ENCODE measurements at regions of chr1 and their contacts with region 1.

Region 1: GRCh38 chr1:58190267-58190988 is 356.1 kb downstream of the OMA1 start:
- DNase-seq: no peak
- ATAC-seq: no peak
- H3K4me3 ChIP-seq: no peak overlapping the region
- H3K27ac ChIP-seq: no peak overlapping the region
- H3K4me1 ChIP-seq: no peaks in the 10 kb centered on the region
- H3K27me3 ChIP-seq: peaks cover 15% of the 10 kb centered on the region
- CTCF ChIP-seq: no peak
- POLR2A ChIP-seq: no peak
- RAD21 ChIP-seq: no peak

Region 2: DNA sequence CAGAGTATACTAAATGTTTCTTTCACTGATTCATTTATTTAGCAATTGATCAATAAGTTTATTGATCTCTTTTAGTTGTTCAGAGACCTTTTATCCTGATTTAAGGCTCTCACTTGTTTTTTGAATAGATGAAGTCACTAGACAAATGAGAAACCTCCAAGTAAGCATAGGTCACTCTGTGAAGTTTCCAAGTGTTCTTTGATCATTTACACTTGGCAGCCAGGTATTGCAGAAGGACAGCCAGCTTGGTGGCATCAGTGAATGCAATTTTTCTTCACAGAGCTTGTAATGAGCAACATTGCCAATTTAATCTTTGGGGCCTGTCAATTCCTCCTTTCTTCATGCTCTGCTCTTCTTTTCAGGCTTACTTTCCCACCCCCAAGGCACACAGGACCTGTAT is 56.9 kb before region 1 on chr1:
- CTCF ChIA-PET with region 1: no interaction called
- POLR2A ChIA-PET with region 1: no interaction called
- RAD21 ChIA-PET with region 1: no interaction called
- intact Hi-C with region 1: no loop called
- DNase-seq: no peak
- ATAC-seq: no peak
- H3K4me3 ChIP-seq: no peak overlapping the region
- H3K27ac ChIP-seq: no peak overlapping the region
- H3K4me1 ChIP-seq: no peaks in the 10 kb centered on the region
- H3K27me3 ChIP-seq: no peaks in the 10 kb centered on the region
- CTCF ChIP-seq: no peak
- POLR2A ChIP-seq: no peak
- RAD21 ChIP-seq: no peak

Region 3: GRCh38 chr1:58143972-58144697 is 46.3 kb before region 1 on chr1:
- CTCF ChIA-PET with region 1: no interaction called
- POLR2A ChIA-PET with region 1: no interaction called
- RAD21 ChIA-PET with region 1: no interaction called
- intact Hi-C with region 1: loop called (anchors 1 kb)
- DNase-seq: no peak
- ATAC-seq: no peak
- H3K4me3 ChIP-seq: no peak overlapping the region
- H3K27ac ChIP-seq: no peak overlapping the region
- H3K4me1 ChIP-seq: no peaks in the 10 kb centered on the region
- H3K27me3 ChIP-seq: peaks cover 14% of the 10 kb centered on the region; the same call in 1 of the 2 replicates
- CTCF ChIP-seq: no peak
- POLR2A ChIP-seq: no peak
- RAD21 ChIP-seq: no peak

Region 4: DNA sequence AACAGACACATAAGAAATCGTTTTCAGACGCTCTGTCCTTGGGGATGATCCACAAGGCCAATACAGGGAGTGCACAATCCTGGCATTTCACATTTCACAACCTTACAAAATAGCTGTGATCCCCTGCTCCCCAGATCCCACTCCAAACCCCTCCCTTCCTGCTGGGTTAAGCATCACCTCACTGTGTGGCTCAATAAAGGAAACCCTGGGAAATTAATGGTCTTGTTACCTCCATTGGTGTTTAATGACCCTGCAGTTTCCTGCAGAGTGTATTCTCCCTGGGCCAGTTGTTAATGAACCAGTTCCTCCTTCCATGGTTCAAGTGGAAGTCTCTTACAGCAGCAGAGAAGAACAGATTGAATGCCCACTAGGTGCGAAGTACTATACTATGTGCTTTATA is 21.4 kb after region 1 on chr1:
- CTCF ChIA-PET with region 1: no interaction called
- POLR2A ChIA-PET with region 1: no interaction called
- RAD21 ChIA-PET with region 1: no interaction called
- intact Hi-C with region 1: no loop called
- DNase-seq: no peak
- ATAC-seq: no peak
- H3K4me3 ChIP-seq: no peak overlapping the region
- H3K27ac ChIP-seq: no peak overlapping the region
- H3K4me1 ChIP-seq: no peaks in the 10 kb centered on the region
- H3K27me3 ChIP-seq: peaks cover 18% of the 10 kb centered on the region; the same call in 1 of the 2 replicates
- CTCF ChIP-seq: no peak
- POLR2A ChIP-seq: no peak
- RAD21 ChIP-seq: no peak